ENCODE measurements at regions of chr1 and their contacts with region 1.

Region 1: GRCh38 chr1:94947437-94947836 is 20.5 kb upstream of the CNN3 start:
- DNase-seq: no peak
- H3K4me3 ChIP-seq: no peak overlapping the region
- H3K27ac ChIP-seq: no peak overlapping the region
- H3K4me1 ChIP-seq: no peaks in the 10 kb centered on the region
- H3K27me3 ChIP-seq: no peaks in the 10 kb centered on the region
- CTCF ChIP-seq: no peak

Region 2: DNA sequence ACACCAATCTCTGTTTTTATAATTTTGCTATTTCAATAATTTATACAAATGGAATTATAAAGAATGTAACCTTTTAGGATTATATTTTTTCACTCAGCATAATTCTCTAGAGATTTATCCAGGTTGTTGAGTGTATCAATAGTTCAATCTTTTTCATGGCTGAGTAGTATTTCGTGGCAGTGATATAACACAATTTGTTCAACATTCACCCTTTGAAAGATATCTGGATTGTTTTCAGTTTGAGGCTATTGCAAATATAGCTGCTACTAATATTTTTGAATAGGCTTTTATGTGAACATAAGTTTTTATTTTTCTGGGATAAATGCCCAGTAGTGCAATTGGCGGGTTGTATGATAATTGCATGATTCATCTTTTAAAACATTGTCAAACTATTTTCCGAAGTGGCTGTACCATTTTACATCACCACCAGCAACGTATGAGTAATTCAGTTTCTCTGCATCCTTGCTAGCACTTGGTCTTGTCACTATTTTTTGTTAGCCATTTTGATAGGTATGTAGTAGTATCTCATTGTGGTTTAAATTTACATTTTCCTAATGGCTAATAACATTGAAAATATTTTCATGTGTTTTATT is 584.9 kb before region 1 on chr1:
- CTCF ChIA-PET with region 1: no interaction called
- POLR2A ChIA-PET with region 1: no interaction called
- intact Hi-C with region 1: no loop called
- DNase-seq: no peak
- H3K4me3 ChIP-seq: no peak overlapping the region
- H3K27ac ChIP-seq: no peak overlapping the region
- H3K4me1 ChIP-seq: no peaks in the 10 kb centered on the region
- H3K27me3 ChIP-seq: no peaks in the 10 kb centered on the region
- CTCF ChIP-seq: no peak

Region 3: DNA sequence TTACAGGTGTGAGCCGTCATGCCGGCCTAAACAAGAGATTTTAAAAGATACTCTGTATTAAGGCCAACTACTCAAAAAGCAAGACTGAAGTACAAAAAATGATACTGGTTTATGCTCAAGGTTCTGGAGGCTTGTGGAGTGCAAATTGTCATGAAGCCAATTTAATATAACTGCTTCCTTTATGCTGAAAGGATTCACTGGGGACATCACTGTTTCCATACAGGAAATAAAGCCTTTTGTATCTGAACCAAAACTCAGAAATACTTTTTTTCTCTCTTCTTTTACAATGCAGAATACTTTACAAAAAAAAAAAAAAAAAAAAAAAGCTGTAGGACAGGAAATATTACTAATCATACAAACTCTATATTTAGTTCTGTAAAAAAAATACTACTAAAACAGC is 35.0 kb after region 1 on chr1:
- CTCF ChIA-PET with region 1: no interaction called
- POLR2A ChIA-PET with region 1: interaction called, 13 read pairs
- intact Hi-C with region 1: no loop called
- DNase-seq: peak; percentile 31
- H3K4me3 ChIP-seq: no peak overlapping the region
- H3K27ac ChIP-seq: no peak overlapping the region
- H3K4me1 ChIP-seq: peaks cover 17% of the 10 kb centered on the region
- H3K27me3 ChIP-seq: no peaks in the 10 kb centered on the region
- CTCF ChIP-seq: no peak

Measured in A673 (cell line).